HEK293 (cell line): ENCODE measurements at regions of chr15 and their contacts with region 1.

Region 1: DNA sequence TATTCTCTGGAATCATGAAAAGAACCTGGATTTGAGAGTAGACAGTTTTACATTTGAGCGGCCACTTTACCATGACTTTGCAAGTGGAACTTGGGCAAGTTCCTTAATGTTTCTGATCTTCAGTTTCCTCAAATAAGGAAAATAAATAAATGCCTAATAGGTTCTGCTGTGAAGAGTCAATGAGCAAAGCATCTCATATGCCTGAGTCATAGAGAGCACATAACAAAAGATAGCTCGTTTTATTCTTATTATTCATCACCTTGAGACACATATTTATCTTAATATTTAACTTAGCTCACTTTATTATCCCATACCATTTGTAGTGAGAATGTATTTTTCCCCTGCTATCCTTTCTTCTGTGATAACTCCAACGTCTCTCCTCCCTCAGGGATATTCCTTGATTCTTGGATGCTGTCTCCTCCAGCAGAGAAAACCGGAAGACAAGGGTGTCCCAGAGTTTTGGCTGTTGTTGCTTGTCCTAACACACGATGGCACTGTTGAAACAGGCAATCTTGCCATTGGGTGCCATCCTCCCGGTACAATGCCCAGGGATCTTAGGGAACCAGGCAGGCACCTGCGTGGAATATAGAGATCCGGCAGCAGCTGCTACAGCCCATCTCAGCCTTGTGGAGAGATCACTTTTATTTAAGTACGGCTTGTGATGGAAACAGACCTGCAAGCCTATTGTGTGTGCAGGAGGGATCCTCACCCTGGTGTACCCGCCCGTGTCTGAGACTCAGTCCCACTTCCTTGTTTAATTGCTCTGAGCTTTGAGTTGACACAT is 33.3 kb upstream of the VPS33B start:
- H3K4me3 ChIP-seq: no peak overlapping the region
- H3K27ac ChIP-seq: no peak overlapping the region
- H3K4me1 ChIP-seq: no peaks in the 10 kb centered on the region
- CTCF ChIP-seq: peak; percentile 80

Region 2: GRCh38 chr15:91072156-91072555 is 16.4 kb after region 1 on chr15:
- CTCF ChIA-PET with region 1: interaction called, 11 read pairs
- POLR2A ChIA-PET with region 1: no interaction called
- H3K4me3 ChIP-seq: no peak overlapping the region
- H3K27ac ChIP-seq: no peak overlapping the region
- H3K4me1 ChIP-seq: no peaks in the 10 kb centered on the region
- CTCF ChIP-seq: no peak

Region 3: GRCh38 chr15:91224755-91225380 is 169.1 kb after region 1 on chr15:
- CTCF ChIA-PET with region 1: interaction called, 104 read pairs
- POLR2A ChIA-PET with region 1: no interaction called
- H3K4me3 ChIP-seq: no peak overlapping the region
- H3K27ac ChIP-seq: no peak overlapping the region
- H3K4me1 ChIP-seq: no peaks in the 10 kb centered on the region
- CTCF ChIP-seq: peak; percentile 44; the same call in 1 of the 2 replicates

Region 4: DNA sequence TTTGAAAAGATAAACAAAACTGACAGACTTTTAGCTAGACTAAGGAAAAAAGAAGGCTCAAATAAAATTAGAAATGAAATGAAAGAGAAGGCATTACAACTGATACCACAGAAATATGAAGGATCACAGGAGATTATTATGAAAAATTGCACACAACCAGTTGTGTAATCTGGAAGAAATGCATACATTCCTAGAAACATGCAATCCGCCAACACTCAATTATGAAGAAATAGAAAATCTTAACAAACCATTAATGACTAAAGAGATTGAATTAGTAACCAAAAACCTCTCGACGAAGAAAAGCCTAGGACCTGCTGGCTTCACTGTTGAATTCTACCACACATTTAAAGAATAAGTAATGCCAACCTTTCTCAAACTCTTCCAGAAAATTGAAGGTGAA is 193.9 kb after region 1 on chr15:
- CTCF ChIA-PET with region 1: interaction called, 65 read pairs
- POLR2A ChIA-PET with region 1: no interaction called
- H3K4me3 ChIP-seq: no peak overlapping the region
- H3K27ac ChIP-seq: no peak overlapping the region
- H3K4me1 ChIP-seq: no peaks in the 10 kb centered on the region
- CTCF ChIP-seq: no peak

Region 5: DNA sequence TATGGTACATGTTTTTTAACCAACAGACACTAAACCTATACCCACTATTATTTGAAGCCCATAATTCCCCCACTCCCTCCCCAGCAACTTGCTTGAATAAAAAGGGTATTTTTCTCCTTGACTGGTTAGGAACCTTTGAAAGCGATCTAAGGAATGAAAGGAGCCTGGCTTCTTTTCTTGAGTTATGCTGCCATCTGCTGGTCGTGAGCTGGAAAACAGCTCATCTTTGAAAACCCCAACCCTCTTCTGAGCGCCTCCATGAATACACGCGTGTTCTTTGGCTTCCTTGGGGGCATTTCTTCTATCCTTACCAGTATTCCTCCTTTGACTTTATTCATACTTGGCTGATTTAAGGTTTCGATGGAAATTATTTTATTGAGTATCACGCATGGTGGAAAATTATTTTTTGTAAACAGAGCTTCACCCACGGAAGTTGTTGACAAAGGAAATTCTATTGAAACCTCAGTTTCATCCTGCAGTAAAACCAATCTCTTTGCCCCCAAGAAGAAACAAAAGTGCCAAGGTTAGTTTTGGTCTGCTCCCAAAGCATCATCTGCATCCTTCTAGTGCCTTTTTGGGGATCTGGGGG is 215.9 kb after region 1 on chr15:
- CTCF ChIA-PET with region 1: interaction called, 131 read pairs
- POLR2A ChIA-PET with region 1: no interaction called
- H3K4me3 ChIP-seq: no peak overlapping the region
- H3K27ac ChIP-seq: no peak overlapping the region
- H3K4me1 ChIP-seq: no peaks in the 10 kb centered on the region
- CTCF ChIP-seq: peak; percentile 63